PC-3 (cell line): ENCODE measurements at regions of chr10 and their contacts with region 1.

Region 1: GRCh38 chr10:68792115-68792514 is 35.2 kb upstream of the STOX1 start:
- DNase-seq: peak; percentile 48
- ATAC-seq: no peak
- H3K4me3 ChIP-seq: no peak overlapping the region
- H3K27ac ChIP-seq: no peak overlapping the region
- H3K4me1 ChIP-seq: no peaks in the 10 kb centered on the region
- H3K27me3 ChIP-seq: no peaks in the 10 kb centered on the region
- CTCF ChIP-seq: peak; percentile 68

Region 2: GRCh38 chr10:68826764-68827591 is 34.9 kb after region 1 on chr10 and contains the start of gene STOX1:
- CTCF ChIA-PET with region 1: no interaction called
- POLR2A ChIA-PET with region 1: no interaction called
- intact Hi-C with region 1: loop called (anchors 1 kb)
- DNase-seq: peak; percentile 69
- ATAC-seq: peak; percentile 88
- H3K4me3 ChIP-seq: peak within 1 kb of the TSS; percentile 79
- H3K27ac ChIP-seq: no peak within 1 kb of the TSS
- H3K4me1 ChIP-seq: peaks cover 5% of the 10 kb centered on the region; the same call in 1 of the 2 replicates
- H3K27me3 ChIP-seq: no peaks in the 10 kb centered on the region
- CTCF ChIP-seq: no peak
- total RNA-seq, gene STOX1: 1.4 and 3.2 TPM in 2 replicates

Region 3: GRCh38 chr10:68901104-68901927 is 109.2 kb after region 1 on chr10 and contains the start of gene DDX50:
- CTCF ChIA-PET with region 1: interaction called, 3 read pairs
- POLR2A ChIA-PET with region 1: interaction called, 8 read pairs
- intact Hi-C with region 1: loop called (anchors 1 kb)
- DNase-seq: peak; percentile 100
- ATAC-seq: peak; percentile 96
- H3K4me3 ChIP-seq: peak within 1 kb of the TSS; percentile 88
- H3K27ac ChIP-seq: peak within 1 kb of the TSS; percentile 85
- H3K4me1 ChIP-seq: peaks cover 16% of the 10 kb centered on the region
- H3K27me3 ChIP-seq: no peaks in the 10 kb centered on the region
- CTCF ChIP-seq: no peak
- total RNA-seq, gene DDX50: 40.4 and 41.4 TPM in 2 replicates

Region 4: GRCh38 chr10:69061305-69062161 is 269.4 kb after region 1 on chr10:
- CTCF ChIA-PET with region 1: no interaction called
- POLR2A ChIA-PET with region 1: no interaction called
- intact Hi-C with region 1: no loop called
- DNase-seq: peak; percentile 100
- ATAC-seq: peak; percentile 82
- H3K4me3 ChIP-seq: peak overlapping the region; percentile 64
- H3K27ac ChIP-seq: peak overlapping the region; percentile 89
- H3K4me1 ChIP-seq: peaks cover 37% of the 10 kb centered on the region
- H3K27me3 ChIP-seq: no peaks in the 10 kb centered on the region
- CTCF ChIP-seq: no peak